Stomach (tissue), 19 donors: ENCODE measurements at regions of chr7 and their contacts with region 1.

Region 1: GRCh38 chr7:24665564-24666294 is 91.5 kb downstream of the GSDME start:
- DNase-seq: peak in 1 of 2 donors; percentile 77
- H3K4me3 ChIP-seq: no peak overlapping the region
- H3K27ac ChIP-seq: no peak overlapping the region
- H3K4me1 ChIP-seq: no peaks in the 10 kb centered on the region
- H3K27me3 ChIP-seq: no peaks in the 10 kb centered on the region
- CTCF ChIP-seq: peak in 5 of 7 experiments; percentile 38 to 66 (median 61)
- EP300 ChIP-seq: no peak
- POLR2A ChIP-seq: no peak

Region 2: DNA sequence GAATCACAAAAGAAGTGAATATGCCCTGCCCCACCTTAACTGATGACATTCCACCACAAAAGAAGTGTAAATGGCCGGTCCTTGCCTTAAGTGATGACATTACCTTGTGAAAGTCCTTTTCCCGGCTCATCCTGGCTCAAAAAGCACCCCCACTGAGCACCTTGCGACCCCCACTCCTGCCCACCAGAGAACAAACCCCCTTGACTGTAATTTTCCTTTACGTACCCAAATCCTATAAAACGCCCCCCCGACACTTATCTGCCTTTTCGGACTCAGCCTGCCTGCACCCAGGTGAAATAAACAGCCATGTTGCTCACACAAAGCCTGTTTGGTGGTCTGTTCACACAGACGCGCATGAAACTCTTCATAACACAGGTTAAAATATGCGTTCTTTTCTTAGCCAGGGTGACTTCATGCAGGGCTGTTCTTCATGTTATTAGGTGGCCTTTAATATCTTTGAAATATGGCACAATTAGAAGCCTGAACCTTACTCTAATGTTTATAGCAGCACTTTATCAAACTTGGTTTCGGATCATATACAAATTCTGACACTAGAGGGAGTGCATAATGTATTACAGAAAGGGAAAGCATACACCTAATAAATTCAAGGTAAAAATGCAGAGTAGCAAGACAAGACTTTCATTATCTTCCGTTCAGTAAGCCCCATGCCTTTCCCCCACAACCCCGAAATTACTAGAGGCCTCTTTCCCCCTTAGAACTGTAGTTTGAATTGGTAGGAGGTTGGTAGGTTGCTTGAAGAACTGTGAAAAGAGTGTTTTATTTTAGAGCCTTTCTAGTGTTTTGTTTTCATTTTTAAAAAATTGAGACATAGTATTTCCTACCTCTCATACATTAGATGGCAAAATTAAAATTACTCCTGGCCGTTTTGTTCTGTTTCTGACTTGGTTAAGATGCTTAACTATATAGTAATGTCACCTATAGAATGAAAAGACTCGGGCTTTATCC is 263.8 kb before region 1 on chr7:
- intact Hi-C with region 1: loop called (anchors 10 kb)
- DNase-seq: peak in 1 of 2 donors; percentile 50
- H3K4me3 ChIP-seq: no peak overlapping the region
- H3K27ac ChIP-seq: no peak overlapping the region
- H3K4me1 ChIP-seq: no peaks in the 10 kb centered on the region
- H3K27me3 ChIP-seq: no peaks in the 10 kb centered on the region
- CTCF ChIP-seq: peak in 4 of 7 experiments; percentile 7 to 30 (median 14)
- EP300 ChIP-seq: no peak
- POLR2A ChIP-seq: no peak

Region 3: GRCh38 chr7:25167262-25167843 is 501.6 kb after region 1 on chr7:
- intact Hi-C with region 1: no loop called
- DNase-seq: peak; percentile 34 to 47
- H3K4me3 ChIP-seq: no peak overlapping the region
- H3K27ac ChIP-seq: no peak overlapping the region
- H3K4me1 ChIP-seq: peaks cover 6 to 19% (median 9%) of the 10 kb centered on the region in 4 donors
- H3K27me3 ChIP-seq: no peaks in the 10 kb centered on the region
- CTCF ChIP-seq: no peak
- EP300 ChIP-seq: no peak
- POLR2A ChIP-seq: no peak

Region 4: DNA sequence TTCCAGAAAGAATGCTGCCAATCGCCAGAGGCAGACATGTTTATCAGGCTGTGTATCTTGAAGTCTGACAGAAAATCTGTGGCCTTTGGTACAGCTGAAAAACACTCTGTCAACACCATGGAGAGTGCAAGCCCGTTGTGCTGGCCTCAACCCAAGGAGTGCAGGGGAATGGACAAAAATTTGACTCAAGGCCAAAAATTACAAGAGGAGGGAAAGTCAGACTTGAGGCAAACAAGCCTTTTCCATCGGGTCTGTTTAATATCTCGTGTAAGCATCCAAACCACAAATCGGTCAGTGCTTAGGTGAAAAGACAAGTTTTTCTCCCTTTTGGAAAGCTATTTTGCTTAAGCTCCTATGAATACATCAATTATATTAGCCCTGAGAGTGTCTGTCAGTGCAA is 1181.0 kb after region 1 on chr7:
- intact Hi-C with region 1: no loop called
- DNase-seq: peak; percentile 42 to 88
- H3K4me3 ChIP-seq: no peak overlapping the region
- H3K27ac ChIP-seq: peak overlapping the region in 3 of 5 donors; percentile 52 to 91 (median 77)
- H3K4me1 ChIP-seq: peaks cover 1 to 61% (median 32%) of the 10 kb centered on the region in 4 donors
- H3K27me3 ChIP-seq: peaks cover 0 to 73% (median 27%) of the 10 kb centered on the region in 3 donors
- CTCF ChIP-seq: no peak
- EP300 ChIP-seq: no peak
- POLR2A ChIP-seq: no peak